ENCODE measurements at regions of chr18 and their contacts with region 1.

Region 1: DNA sequence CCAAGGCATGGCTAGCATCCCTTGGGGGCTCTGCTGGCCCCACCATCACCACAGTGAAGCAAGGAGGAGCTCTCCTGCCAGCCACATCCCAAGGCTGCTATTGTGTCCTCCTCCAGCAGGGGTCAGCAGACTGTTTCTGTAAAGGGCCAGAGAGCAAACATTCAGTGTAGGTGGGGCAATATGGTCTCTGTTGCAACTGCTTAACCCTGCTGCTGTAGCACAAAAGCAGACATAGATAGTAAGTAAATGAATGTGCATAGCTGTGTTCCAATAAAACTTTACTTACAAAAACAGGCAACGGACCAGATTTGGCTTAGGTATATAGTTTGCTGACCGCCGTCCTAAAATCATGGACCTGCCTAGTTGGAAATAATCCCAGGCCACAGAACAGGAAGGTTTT is 36.4 kb upstream of the ZBTB7C start:
- DNase-seq: peak; percentile 56
- H3K4me3 ChIP-seq: no peak overlapping the region
- H3K27ac ChIP-seq: no peak overlapping the region
- H3K4me1 ChIP-seq: no peaks in the 10 kb centered on the region
- CTCF ChIP-seq: peak; percentile 78

Region 2: GRCh38 chr18:48022531-48023329 is 422.8 kb before region 1 on chr18:
- CTCF ChIA-PET with region 1: no interaction called
- POLR2A ChIA-PET with region 1: no interaction called
- intact Hi-C with region 1: loop called (anchors 5 kb)
- DNase-seq: peak; percentile 52
- H3K4me3 ChIP-seq: no peak overlapping the region
- H3K27ac ChIP-seq: no peak overlapping the region
- H3K4me1 ChIP-seq: no peaks in the 10 kb centered on the region
- CTCF ChIP-seq: peak; percentile 66

Region 3: GRCh38 chr18:48203961-48204666 is 241.4 kb before region 1 on chr18:
- CTCF ChIA-PET with region 1: no interaction called
- POLR2A ChIA-PET with region 1: no interaction called
- intact Hi-C with region 1: no loop called
- DNase-seq: no peak
- H3K4me3 ChIP-seq: no peak overlapping the region
- H3K27ac ChIP-seq: no peak overlapping the region
- H3K4me1 ChIP-seq: no peaks in the 10 kb centered on the region
- CTCF ChIP-seq: no peak

Region 4: GRCh38 chr18:48230467-48231113 is 214.9 kb before region 1 on chr18:
- CTCF ChIA-PET with region 1: interaction called, 3 read pairs
- POLR2A ChIA-PET with region 1: no interaction called
- intact Hi-C with region 1: loop called (anchors 10 kb)
- DNase-seq: peak; percentile 14
- H3K4me3 ChIP-seq: no peak overlapping the region
- H3K27ac ChIP-seq: no peak overlapping the region
- H3K4me1 ChIP-seq: no peaks in the 10 kb centered on the region
- CTCF ChIP-seq: peak; percentile 49

Region 5: GRCh38 chr18:48500517-48500916 is 55.0 kb after region 1 on chr18:
- CTCF ChIA-PET with region 1: no interaction called
- POLR2A ChIA-PET with region 1: no interaction called
- intact Hi-C with region 1: no loop called
- DNase-seq: no peak
- H3K4me3 ChIP-seq: no peak overlapping the region
- H3K27ac ChIP-seq: no peak overlapping the region
- H3K4me1 ChIP-seq: no peaks in the 10 kb centered on the region
- CTCF ChIP-seq: no peak